ENCODE measurements at regions of chr14 and their contacts with region 1.

Region 1: GRCh38 chr14:52402812-52403526 is 88.9 kb downstream of the PTGER2 start:
- DNase-seq: no peak
- H3K4me3 Mint-ChIP-seq: no peak overlapping the region
- H3K27ac Mint-ChIP-seq: peak overlapping the region; percentile 40
- H3K4me1 Mint-ChIP-seq: peaks cover 70% of the 10 kb centered on the region
- H3K27me3 Mint-ChIP-seq: peaks cover 10% of the 10 kb centered on the region

Region 2: DNA sequence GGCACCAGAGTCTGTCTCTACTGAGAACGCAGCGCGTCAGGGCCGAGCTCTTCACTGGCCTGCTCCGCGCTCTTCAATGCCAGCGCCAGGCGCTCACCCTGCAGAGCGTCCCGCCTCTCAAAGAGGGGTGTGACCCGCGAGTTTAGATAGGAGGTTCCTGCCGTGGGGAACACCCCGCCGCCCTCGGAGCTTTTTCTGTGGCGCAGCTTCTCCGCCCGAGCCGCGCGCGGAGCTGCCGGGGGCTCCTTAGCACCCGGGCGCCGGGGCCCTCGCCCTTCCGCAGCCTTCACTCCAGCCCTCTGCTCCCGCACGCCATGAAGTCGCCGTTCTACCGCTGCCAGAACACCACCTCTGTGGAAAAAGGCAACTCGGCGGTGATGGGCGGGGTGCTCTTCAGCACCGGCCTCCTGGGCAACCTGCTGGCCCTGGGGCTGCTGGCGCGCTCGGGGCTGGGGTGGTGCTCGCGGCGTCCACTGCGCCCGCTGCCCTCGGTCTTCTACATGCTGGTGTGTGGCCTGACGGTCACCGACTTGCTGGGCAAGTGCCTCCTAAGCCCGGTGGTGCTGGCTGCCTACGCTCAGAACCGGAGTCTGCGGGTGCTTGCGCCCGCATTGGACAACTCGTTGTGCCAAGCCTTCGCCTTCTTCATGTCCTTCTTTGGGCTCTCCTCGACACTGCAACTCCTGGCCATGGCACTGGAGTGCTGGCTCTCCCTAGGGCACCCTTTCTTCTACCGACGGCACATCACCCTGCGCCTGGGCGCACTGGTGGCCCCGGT is 135.3 kb before region 1 on chr14 and contains the start of gene PTGDR:
- CTCF ChIA-PET with region 1: no interaction called
- POLR2A ChIA-PET with region 1: no interaction called
- DNase-seq: peak; percentile 28
- H3K4me3 Mint-ChIP-seq: peak within 1 kb of the TSS; percentile 77
- H3K27ac Mint-ChIP-seq: no peak within 1 kb of the TSS
- H3K4me1 Mint-ChIP-seq: peaks cover 47% of the 10 kb centered on the region
- H3K27me3 Mint-ChIP-seq: peaks cover 55% of the 10 kb centered on the region
- total RNA-seq, gene PTGDR: 0.25 to 0.38 TPM

Region 3: DNA sequence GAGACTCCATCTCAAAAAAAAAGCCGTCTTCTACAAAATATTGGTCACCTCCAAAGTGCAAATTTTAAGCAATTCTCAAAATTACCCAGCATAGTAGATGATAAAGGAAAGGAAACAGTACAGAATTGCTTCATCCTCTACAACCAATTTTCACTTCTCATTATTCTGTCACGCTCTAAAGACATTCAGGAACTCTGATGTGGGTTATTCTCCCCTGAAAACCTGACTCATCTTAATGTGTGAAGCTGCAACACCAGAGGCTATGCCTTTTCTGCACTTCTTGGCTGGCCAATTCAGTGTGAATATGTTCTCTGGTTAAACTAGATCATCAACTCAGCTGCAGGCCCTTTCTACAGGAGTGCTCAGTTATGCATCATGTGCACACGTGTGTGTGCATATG is 77.8 kb before region 1 on chr14:
- CTCF ChIA-PET with region 1: no interaction called
- POLR2A ChIA-PET with region 1: interaction called, 23 read pairs
- DNase-seq: peak; percentile 47
- H3K4me3 Mint-ChIP-seq: peak overlapping the region; percentile 46
- H3K27ac Mint-ChIP-seq: peak overlapping the region; percentile 86
- H3K4me1 Mint-ChIP-seq: peaks cover 91% of the 10 kb centered on the region
- H3K27me3 Mint-ChIP-seq: peaks cover 2% of the 10 kb centered on the region

Region 4: DNA sequence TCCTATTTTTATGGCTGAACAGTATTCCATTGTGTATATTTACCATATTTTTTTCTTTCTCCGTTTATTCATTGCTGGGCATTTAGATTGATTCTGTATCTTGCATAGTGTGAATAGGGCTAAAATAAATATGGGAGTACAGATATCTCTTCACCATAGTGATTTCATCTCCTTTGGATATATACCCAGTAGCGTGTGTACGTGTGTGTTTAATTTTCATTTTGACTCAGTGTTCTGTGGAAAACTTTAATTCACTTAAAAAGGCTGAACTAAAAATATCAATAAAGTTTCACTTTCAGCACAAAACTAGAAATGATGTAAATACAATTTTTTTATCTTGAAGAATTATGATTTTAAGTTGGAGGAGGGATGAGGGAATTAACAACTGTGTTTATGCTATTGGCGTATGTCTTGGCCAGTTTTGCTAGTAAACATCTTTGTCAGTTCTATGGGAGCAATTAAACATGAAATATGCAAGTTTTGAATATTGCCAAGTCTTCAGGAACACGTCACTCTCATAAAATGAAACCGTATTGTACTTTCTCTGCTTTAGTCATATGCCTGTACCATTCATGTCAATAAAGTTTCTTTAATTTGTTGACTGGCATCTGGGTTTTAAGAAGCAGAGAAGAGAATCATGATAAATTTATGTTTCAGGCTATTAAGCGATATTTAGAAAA is 10.9 kb after region 1 on chr14:
- CTCF ChIA-PET with region 1: interaction called, 9 read pairs
- POLR2A ChIA-PET with region 1: interaction called, 15 read pairs
- DNase-seq: no peak
- H3K4me3 Mint-ChIP-seq: peak overlapping the region; percentile 50
- H3K27ac Mint-ChIP-seq: peak overlapping the region; percentile 75
- H3K4me1 Mint-ChIP-seq: peaks cover 50% of the 10 kb centered on the region
- H3K27me3 Mint-ChIP-seq: no peaks in the 10 kb centered on the region

Region 5: GRCh38 chr14:52531481-52531880 is 128.5 kb after region 1 on chr14:
- CTCF ChIA-PET with region 1: no interaction called
- POLR2A ChIA-PET with region 1: no interaction called
- DNase-seq: no peak
- H3K4me3 Mint-ChIP-seq: no peak overlapping the region
- H3K27ac Mint-ChIP-seq: no peak overlapping the region
- H3K4me1 Mint-ChIP-seq: no peaks in the 10 kb centered on the region
- H3K27me3 Mint-ChIP-seq: no peaks in the 10 kb centered on the region

Region 6: GRCh38 chr14:52552063-52552988 is 149.4 kb after region 1 on chr14 and contains the starts of genes GPR137C and TXNDC16:
- CTCF ChIA-PET with region 1: no interaction called
- POLR2A ChIA-PET with region 1: interaction called, 13 read pairs
- DNase-seq: peak; percentile 100
- H3K4me3 Mint-ChIP-seq: peak within 1 kb of the TSS; percentile 92
- H3K27ac Mint-ChIP-seq: peak within 1 kb of the TSS; percentile 78
- H3K4me1 Mint-ChIP-seq: peaks cover 27% of the 10 kb centered on the region
- H3K27me3 Mint-ChIP-seq: peaks cover 20% of the 10 kb centered on the region
- total RNA-seq, gene GPR137C: 0.30 to 0.88 TPM
- total RNA-seq, gene TXNDC16: 8.8 to 9.4 TPM

Measured in activated CD4-positive, alpha-beta memory T cell treated with anti-CD3 and anti-CD28 coated beads, Interleukin-2, amount 10 ng/mL, durations not matched to agents 7 days and 5 days (primary cell).